CD4-positive, alpha-beta memory T cell (primary cell): ENCODE measurements at regions of chr9 and their contacts with region 1.

Region 1: GRCh38 chr9:36166101-36166927 is 2.9 kb upstream of the CCIN start:
- DNase-seq: peak; percentile 76 to 86 (median 79)
- H3K4me3 ChIP-seq: peak overlapping the region in 1 of 2 donors; percentile 57
- H3K4me3 Mint-ChIP-seq: peak overlapping the region; percentile 67 to 84 (median 78)
- H3K27ac ChIP-seq: no peak overlapping the region
- H3K27ac Mint-ChIP-seq: peak overlapping the region; percentile 35 to 78 (median 60)
- H3K4me1 ChIP-seq: peaks cover 12% of the 10 kb centered on the region
- H3K4me1 Mint-ChIP-seq: peaks cover 10 to 28% (median 14%) of the 10 kb centered on the region in 4 donors
- H3K27me3 ChIP-seq: no peaks in the 10 kb centered on the region
- H3K27me3 Mint-ChIP-seq: no peaks in the 10 kb centered on the region

Region 2: DNA sequence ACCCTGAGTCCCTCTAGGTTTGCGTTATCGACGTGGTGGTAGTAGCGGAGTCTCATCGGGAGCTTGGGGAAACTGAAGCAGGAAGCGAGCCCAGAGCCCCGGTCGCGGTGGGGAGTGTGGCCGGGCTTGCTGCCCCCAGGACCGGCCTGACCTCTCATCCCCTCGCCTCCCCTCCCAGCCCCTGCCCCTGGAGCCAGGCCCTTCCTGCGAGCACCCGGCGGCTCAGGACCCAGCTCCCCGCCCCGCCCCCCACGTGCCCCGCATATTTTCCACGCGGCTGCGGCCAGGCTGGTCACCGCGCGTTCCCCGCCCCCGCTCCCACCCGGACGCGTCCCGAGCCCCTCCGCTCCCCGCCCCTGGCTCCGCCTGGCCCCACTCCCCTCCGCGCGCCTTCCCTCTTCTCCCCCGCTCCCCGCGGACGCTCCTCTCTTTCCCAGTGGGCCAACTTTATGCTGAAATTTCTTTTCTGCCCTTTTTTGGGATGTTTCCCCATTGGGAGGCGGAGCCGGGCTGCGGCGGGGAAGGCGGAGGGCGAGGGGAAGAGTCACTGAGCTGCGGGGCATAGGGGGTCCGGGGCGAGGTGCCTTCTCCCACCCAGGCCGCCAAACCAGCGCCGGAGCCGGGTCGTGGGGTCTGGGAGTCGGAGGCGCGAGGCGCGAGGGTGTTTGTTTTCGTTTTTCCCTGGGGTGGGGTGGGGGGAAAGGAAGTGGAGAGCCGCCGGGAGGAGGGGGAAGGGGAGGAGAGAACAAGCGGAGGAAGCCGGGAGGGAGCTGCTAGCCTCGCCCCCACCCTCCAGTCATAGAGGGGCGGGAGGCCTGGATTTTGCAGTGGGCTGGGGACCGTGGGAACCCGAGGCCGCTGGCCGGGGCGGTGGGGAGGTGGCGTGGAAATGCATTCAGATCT is 475.6 kb before region 1 on chr9:
- CTCF ChIA-PET with region 1: no interaction called
- POLR2A ChIA-PET with region 1: no interaction called
- intact Hi-C with region 1: no loop called
- DNase-seq: peak in 3 of 5 donors; percentile 28 to 59 (median 32)
- H3K4me3 ChIP-seq: peak overlapping the region in 1 of 2 donors; percentile 58
- H3K4me3 Mint-ChIP-seq: peak overlapping the region; percentile 82 to 90 (median 88)
- H3K27ac ChIP-seq: peak overlapping the region; percentile 59
- H3K27ac Mint-ChIP-seq: peak overlapping the region; percentile 70 to 92 (median 81)
- H3K4me1 ChIP-seq: peaks cover 6% of the 10 kb centered on the region
- H3K4me1 Mint-ChIP-seq: peaks cover 6 to 33% (median 16%) of the 10 kb centered on the region in 4 donors
- H3K27me3 ChIP-seq: no peaks in the 10 kb centered on the region
- H3K27me3 Mint-ChIP-seq: no peaks in the 10 kb centered on the region

Region 3: DNA sequence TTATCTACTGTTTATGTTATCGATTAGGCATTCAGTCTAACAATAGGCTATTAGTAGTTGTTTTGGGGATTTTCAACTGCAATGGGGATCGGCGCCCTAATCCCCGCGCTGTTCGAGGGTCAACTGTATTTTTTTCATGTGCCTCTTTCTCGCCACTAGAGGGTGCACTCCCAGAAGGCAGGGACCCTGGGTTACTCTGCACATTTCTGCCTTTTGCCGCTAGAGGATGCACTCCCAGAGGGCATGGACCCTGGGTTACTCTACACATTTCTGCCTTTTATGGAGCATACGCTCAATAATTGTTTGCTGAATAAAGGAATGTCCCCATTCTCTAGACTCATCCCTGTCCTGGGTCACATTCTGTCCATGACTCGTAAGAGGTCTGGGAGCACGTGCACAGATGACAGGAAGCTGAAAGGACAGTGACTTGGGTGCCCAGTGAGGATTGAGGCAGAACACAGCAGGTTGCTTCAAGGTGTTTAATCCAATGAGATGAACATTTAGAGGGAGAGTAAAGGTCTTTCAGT is 157.5 kb before region 1 on chr9:
- CTCF ChIA-PET with region 1: no interaction called
- POLR2A ChIA-PET with region 1: no interaction called
- intact Hi-C with region 1: loop called (anchors 2 kb)
- DNase-seq: peak; percentile 59 to 74 (median 68)
- H3K4me3 ChIP-seq: no peak overlapping the region
- H3K4me3 Mint-ChIP-seq: peak overlapping the region in 1 of 8 donors; percentile 22
- H3K27ac ChIP-seq: no peak overlapping the region
- H3K27ac Mint-ChIP-seq: peak overlapping the region in 1 of 7 donors; percentile 10
- H3K4me1 ChIP-seq: peaks cover 3% of the 10 kb centered on the region
- H3K4me1 Mint-ChIP-seq: peaks cover 14 to 17% (median 15%) of the 10 kb centered on the region in 4 donors
- H3K27me3 ChIP-seq: no peaks in the 10 kb centered on the region
- H3K27me3 Mint-ChIP-seq: peaks cover 10 to 23% of the 10 kb centered on the region in 2 donors

Region 4: GRCh38 chr9:36092509-36093215 is 73.7 kb before region 1 on chr9:
- CTCF ChIA-PET with region 1: interaction called, 648 read pairs
- POLR2A ChIA-PET with region 1: no interaction called
- intact Hi-C with region 1: no loop called
- DNase-seq: peak; percentile 42 to 58 (median 48)
- H3K4me3 ChIP-seq: no peak overlapping the region
- H3K4me3 Mint-ChIP-seq: peak overlapping the region; percentile 63 to 84 (median 75)
- H3K27ac ChIP-seq: peak overlapping the region; percentile 20
- H3K27ac Mint-ChIP-seq: peak overlapping the region; percentile 79 to 97 (median 94)
- H3K4me1 ChIP-seq: peaks cover 7% of the 10 kb centered on the region
- H3K4me1 Mint-ChIP-seq: peaks cover 11 to 19% (median 16%) of the 10 kb centered on the region in 4 donors
- H3K27me3 ChIP-seq: no peaks in the 10 kb centered on the region
- H3K27me3 Mint-ChIP-seq: no peaks in the 10 kb centered on the region

Region 5: GRCh38 chr9:36118706-36119105 is 47.6 kb before region 1 on chr9:
- CTCF ChIA-PET with region 1: interaction called, 10 read pairs
- POLR2A ChIA-PET with region 1: no interaction called
- intact Hi-C with region 1: no loop called
- DNase-seq: no peak
- H3K4me3 ChIP-seq: no peak overlapping the region
- H3K4me3 Mint-ChIP-seq: no peak overlapping the region
- H3K27ac ChIP-seq: no peak overlapping the region
- H3K27ac Mint-ChIP-seq: peak overlapping the region in 1 of 7 donors; percentile 51
- H3K4me1 ChIP-seq: no peaks in the 10 kb centered on the region
- H3K4me1 Mint-ChIP-seq: peaks cover 0 to 2% (median 0%) of the 10 kb centered on the region in 4 donors
- H3K27me3 ChIP-seq: no peaks in the 10 kb centered on the region
- H3K27me3 Mint-ChIP-seq: no peaks in the 10 kb centered on the region

Region 6: DNA sequence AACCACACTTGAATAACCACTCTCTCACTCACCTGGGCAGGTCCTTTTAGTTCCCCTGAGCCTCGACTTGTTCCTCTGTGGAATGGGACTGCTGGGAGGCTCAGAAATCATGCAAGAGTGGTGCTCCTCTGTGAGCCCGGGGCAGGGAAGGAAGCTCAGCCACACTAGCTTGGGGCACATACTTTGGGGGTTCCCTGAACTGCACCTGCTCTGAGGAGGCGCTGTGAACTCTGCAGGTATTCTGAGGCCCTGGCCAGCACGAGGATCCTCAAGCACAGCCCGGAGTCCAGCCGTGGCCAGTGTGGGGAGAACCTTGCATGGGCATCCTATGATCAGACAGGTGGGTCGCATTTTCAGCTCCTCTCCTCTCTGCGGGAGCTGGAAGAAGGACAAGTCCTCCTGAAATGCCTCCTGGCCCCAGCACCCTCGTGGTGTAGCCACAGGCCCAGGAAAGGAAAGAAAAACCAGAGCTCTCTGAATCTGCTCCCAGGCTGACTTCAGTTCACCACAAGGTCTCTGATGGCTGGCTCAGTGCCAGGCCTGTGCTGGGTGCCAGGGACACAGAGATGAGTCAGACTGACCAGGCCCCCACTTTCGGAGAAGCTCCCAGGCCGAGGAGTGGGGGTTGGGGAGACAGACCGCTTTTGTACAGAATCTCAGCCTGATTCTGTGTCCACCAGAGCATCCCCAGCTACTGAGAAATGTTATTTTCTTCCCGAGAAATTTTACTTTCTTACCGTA is 17.8 kb before region 1 on chr9:
- CTCF ChIA-PET with region 1: interaction called, 100 read pairs
- POLR2A ChIA-PET with region 1: interaction called, 36 read pairs
- intact Hi-C with region 1: loop called (anchors 1 kb)
- DNase-seq: peak; percentile 56 to 88 (median 61)
- H3K4me3 ChIP-seq: no peak overlapping the region
- H3K4me3 Mint-ChIP-seq: peak overlapping the region in 7 of 8 donors; percentile 17 to 77 (median 42)
- H3K27ac ChIP-seq: peak overlapping the region; percentile 73
- H3K27ac Mint-ChIP-seq: peak overlapping the region; percentile 61 to 95 (median 92)
- H3K4me1 ChIP-seq: peaks cover 100% of the 10 kb centered on the region
- H3K4me1 Mint-ChIP-seq: peaks cover 68 to 99% (median 83%) of the 10 kb centered on the region in 4 donors
- H3K27me3 ChIP-seq: no peaks in the 10 kb centered on the region
- H3K27me3 Mint-ChIP-seq: no peaks in the 10 kb centered on the region